Activated T-helper 1 cell treated with anti-CD3 and anti-CD28 coated beads, Interleukin-12 subunit alpha, Interleukin-12 subunit beta, Interleukin-2, Interleukin-4 antibody, amounts not matched to agents 30 ng/mL and 10 ng/mL and 1 ng/mL, durations not matched to agents 14 hours and 24 hours and 36 hours (primary cell): ENCODE measurements at regions of chr5 and their contacts with region 1.

Region 1: DNA sequence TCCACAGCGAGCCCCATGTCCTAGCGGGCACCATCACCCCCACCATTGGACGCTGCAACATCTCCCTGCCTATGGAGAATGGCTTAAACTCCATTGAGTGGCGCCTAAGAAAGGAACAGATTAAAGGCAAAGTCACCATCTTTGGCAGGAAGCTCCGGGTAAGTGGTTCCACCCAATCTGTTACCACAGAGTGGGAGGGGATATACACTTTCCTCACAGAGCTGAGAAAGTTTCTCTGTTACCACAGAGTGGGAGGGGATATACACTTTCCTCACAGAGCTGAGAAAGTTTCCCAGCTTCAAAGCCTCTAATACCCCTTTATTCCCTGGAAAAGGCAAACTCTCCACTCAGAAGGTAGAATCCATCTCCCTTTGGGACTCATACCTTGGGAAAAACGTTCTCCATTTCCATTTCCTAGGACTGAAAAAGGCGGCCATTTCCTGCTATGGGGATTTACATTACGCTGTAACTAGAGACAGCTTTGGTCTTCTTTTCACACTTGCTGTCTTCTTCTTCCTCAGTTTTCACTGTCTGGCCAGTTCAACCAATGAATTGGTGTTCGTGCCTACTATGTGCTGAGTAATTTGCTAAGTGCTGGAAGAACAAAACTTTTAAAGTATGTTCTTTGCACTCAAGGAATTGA is 63.4 kb upstream of the WWC1 start:
- DNase-seq: peak; percentile 14
- H3K4me3 Mint-ChIP-seq: no peak overlapping the region
- H3K27ac Mint-ChIP-seq: no peak overlapping the region
- H3K4me1 Mint-ChIP-seq: peaks cover 25% of the 10 kb centered on the region
- H3K27me3 Mint-ChIP-seq: peaks cover 34% of the 10 kb centered on the region

Region 2: DNA sequence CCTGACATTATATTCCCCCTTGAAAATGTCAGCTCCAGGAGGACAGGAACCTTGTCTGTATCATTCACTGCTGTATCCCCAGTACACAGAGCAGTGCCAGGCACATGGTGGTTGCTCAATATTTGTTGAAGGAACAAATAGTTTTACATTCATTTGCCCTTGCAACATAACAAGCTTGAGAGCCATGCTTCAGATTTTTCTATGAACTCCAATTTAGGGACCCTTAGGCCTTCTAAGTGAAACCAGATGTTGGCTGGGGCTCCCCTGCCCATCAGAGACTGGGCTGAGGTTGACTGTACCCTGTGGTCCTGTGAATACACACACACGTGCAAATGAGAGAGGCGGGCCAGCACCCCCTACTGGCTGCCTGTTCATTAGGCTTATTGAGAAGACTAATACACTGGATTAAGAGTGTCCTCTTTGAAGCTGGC is 151.5 kb before region 1 on chr5:
- intact Hi-C with region 1: no loop called
- DNase-seq: no peak
- H3K4me3 Mint-ChIP-seq: no peak overlapping the region
- H3K27ac Mint-ChIP-seq: no peak overlapping the region
- H3K4me1 Mint-ChIP-seq: peaks cover 9% of the 10 kb centered on the region
- H3K27me3 Mint-ChIP-seq: peaks cover 5% of the 10 kb centered on the region

Region 3: GRCh38 chr5:168249923-168250322 is 21.8 kb after region 1 on chr5:
- intact Hi-C with region 1: loop called (anchors 2 kb)
- DNase-seq: no peak
- H3K4me3 Mint-ChIP-seq: no peak overlapping the region
- H3K27ac Mint-ChIP-seq: no peak overlapping the region
- H3K4me1 Mint-ChIP-seq: no peaks in the 10 kb centered on the region
- H3K27me3 Mint-ChIP-seq: no peaks in the 10 kb centered on the region